Activated naive CD8-positive, alpha-beta T cell treated with anti-CD3 and anti-CD28 coated beads, Interleukin-2, amount 10 ng/mL, durations not matched to agents 7 days and 5 days (primary cell): ENCODE measurements at regions of chr1 and their contacts with region 1.

Region 1: DNA sequence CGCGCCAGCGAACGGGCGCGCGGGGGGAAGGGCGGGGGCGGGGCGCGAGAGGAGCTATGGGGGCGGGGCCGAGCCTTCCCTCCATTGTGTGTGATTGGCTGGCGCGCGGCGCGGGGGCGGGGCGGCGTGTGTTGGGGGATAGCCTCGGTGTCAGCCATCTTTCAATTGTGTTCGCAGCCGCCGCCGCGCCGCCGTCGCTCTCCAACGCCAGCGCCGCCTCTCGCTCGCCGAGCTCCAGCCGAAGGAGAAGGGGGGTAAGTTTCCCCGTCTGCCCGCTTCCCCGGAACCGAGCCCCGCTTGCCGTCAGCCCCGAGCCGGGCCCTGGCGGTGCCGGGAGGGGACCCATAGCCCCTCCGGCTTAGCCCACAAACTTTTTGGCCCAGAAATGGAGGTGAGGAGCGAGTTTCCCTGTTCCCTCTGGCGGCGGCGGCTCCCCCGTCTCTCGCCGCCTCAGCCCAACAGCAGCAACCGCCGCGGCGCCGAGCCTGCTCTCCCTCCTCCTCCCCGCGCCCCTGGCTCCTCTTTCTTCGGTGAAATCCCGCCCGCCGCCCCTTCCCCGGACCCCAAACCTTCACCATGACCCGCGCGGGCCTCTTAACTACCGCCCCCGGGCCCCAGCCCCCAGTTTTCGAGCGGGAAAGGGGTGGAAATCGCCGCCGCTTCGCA is at the start of gene H3-3A:
- DNase-seq: peak; percentile 99
- ATAC-seq: peak; percentile 85
- H3K4me3 Mint-ChIP-seq: peak within 1 kb of the TSS; percentile 99
- H3K27ac Mint-ChIP-seq: peak within 1 kb of the TSS; percentile 100
- H3K4me1 Mint-ChIP-seq: peaks cover 26% of the 10 kb centered on the region
- H3K27me3 Mint-ChIP-seq: no peaks in the 10 kb centered on the region
- total RNA-seq, gene H3-3A: 454 to 466 TPM

Region 2: DNA sequence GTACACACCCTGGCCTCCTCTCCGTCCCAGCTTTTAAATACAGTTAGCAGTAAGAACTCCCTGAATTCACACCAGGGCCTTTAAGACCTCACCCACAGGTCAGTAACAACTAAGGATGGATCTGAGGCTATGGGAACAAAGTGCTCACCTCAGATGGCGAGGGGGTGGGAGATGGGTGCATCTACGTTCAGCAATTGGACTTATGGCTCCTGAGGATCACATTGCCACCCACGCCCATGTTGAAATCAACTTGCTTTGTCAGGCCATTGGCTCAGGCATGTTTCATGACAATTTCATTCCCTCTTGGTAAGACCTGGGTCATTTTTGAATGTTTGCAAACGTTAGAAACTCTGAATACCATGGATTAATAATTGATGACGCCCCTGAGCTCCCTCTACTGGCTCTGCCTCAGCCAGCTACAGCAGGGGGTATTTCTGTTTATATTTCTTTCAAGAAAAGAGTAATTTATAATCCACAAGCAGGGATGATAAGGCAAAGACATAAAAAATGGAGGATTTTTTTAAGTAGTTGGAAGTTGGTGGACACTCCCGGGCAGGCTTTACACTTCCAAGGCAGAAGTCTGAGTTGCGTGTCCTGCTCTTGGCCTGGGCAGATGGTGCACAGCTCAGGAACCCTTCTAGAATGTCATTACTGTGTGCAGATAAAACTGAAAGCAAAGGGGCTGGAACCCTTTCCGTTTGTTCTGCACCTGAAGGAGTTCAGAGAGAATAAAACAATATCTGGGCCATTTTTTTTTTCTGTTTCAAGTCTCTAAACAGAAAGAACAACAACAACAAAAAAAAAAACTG is 621.2 kb before region 1 on chr1:
- POLR2A ChIA-PET with region 1: interaction called, 12 read pairs
- DNase-seq: no peak
- ATAC-seq: no peak
- H3K4me3 Mint-ChIP-seq: peak overlapping the region; percentile 74
- H3K27ac Mint-ChIP-seq: peak overlapping the region; percentile 84
- H3K4me1 Mint-ChIP-seq: peaks cover 51% of the 10 kb centered on the region
- H3K27me3 Mint-ChIP-seq: no peaks in the 10 kb centered on the region

Region 3: GRCh38 chr1:225777583-225778336 is 284.9 kb before region 1 on chr1 and contains the start of gene SRP9:
- POLR2A ChIA-PET with region 1: interaction called, 18 read pairs
- DNase-seq: peak; percentile 98
- ATAC-seq: peak; percentile 97
- H3K4me3 Mint-ChIP-seq: no peak within 1 kb of the TSS
- H3K27ac Mint-ChIP-seq: no peak within 1 kb of the TSS
- H3K4me1 Mint-ChIP-seq: peaks cover 20% of the 10 kb centered on the region
- H3K27me3 Mint-ChIP-seq: no peaks in the 10 kb centered on the region
- total RNA-seq, gene SRP9: 209 to 226 TPM

Region 4: GRCh38 chr1:226083302-226084101 is 20.8 kb after region 1 on chr1:
- POLR2A ChIA-PET with region 1: interaction called, 21 read pairs
- DNase-seq: peak; percentile 98
- ATAC-seq: peak; percentile 93
- H3K4me3 Mint-ChIP-seq: peak overlapping the region; percentile 94
- H3K27ac Mint-ChIP-seq: peak overlapping the region; percentile 92
- H3K4me1 Mint-ChIP-seq: peaks cover 5% of the 10 kb centered on the region
- H3K27me3 Mint-ChIP-seq: peaks cover 8% of the 10 kb centered on the region

Region 5: DNA sequence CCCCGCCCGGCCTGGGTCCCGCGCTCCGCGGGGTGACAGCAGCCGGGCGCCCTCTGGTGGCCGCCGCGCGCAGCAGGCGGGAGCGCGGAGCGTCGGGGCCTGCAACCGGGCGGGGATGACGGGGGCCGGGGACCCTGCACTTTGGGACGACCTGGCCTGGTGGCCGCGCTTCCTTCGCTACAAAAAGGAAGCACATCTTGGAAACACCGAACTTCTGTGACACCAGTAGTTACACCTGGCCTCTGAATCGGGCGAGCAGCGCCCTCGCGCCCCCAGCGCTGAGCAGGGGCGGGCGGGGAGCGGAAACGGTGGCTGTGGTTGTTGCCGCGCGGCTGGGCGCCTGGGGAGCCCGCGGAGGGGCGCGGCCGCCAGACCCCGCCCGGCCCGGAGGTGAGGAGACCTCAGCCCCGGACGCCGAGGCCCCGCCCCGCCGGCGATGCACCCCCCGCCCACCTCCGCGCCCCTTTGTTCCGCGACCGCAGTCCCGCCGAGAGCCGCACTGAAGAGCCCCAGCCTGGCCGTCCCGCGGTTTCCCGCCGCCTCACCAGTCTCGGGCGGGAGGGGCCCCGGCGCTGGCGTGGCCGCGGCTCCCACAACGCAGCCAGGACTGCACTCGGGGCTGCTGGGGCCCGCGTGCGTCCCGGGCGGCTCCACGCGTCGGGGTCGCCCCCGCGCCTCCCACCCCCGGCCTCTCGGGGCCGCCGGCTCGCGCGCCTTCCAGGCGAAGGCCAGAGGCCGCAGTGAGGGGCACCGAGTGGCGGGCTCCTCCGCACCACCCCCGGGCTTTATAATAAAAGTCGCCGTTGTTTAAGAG is 59.1 kb after region 1 on chr1:
- POLR2A ChIA-PET with region 1: interaction called, 16 read pairs
- DNase-seq: peak; percentile 91
- ATAC-seq: peak; percentile 79
- H3K4me3 Mint-ChIP-seq: peak overlapping the region; percentile 62
- H3K27ac Mint-ChIP-seq: peak overlapping the region; percentile 64
- H3K4me1 Mint-ChIP-seq: peaks cover 15% of the 10 kb centered on the region
- H3K27me3 Mint-ChIP-seq: peaks cover 9% of the 10 kb centered on the region